PC-3 (cell line): ENCODE measurements at regions of chr11 and their contacts with region 1.

Region 1: GRCh38 chr11:13343931-13344717 is 66.5 kb downstream of the BMAL1 start:
- DNase-seq: peak; percentile 88
- ATAC-seq: peak; percentile 35
- H3K4me3 ChIP-seq: no peak overlapping the region
- H3K27ac ChIP-seq: no peak overlapping the region
- H3K4me1 ChIP-seq: peaks cover 15% of the 10 kb centered on the region
- H3K27me3 ChIP-seq: no peaks in the 10 kb centered on the region
- CTCF ChIP-seq: peak; percentile 89

Region 2: GRCh38 chr11:13189561-13190426 is 154.3 kb before region 1 on chr11:
- CTCF ChIA-PET with region 1: no interaction called
- POLR2A ChIA-PET with region 1: no interaction called
- intact Hi-C with region 1: no loop called
- DNase-seq: no peak
- ATAC-seq: no peak
- H3K4me3 ChIP-seq: no peak overlapping the region
- H3K27ac ChIP-seq: no peak overlapping the region
- H3K4me1 ChIP-seq: no peaks in the 10 kb centered on the region
- H3K27me3 ChIP-seq: no peaks in the 10 kb centered on the region
- CTCF ChIP-seq: no peak

Region 3: GRCh38 chr11:13249996-13250395 is 94.1 kb before region 1 on chr11:
- CTCF ChIA-PET with region 1: no interaction called
- POLR2A ChIA-PET with region 1: no interaction called
- intact Hi-C with region 1: loop called (anchors 1 kb)
- DNase-seq: peak; percentile 48
- ATAC-seq: peak; percentile 75
- H3K4me3 ChIP-seq: no peak overlapping the region
- H3K27ac ChIP-seq: no peak overlapping the region
- H3K4me1 ChIP-seq: peaks cover 4% of the 10 kb centered on the region; the same call in 1 of the 2 replicates
- H3K27me3 ChIP-seq: no peaks in the 10 kb centered on the region
- CTCF ChIP-seq: peak; percentile 62